ENCODE measurements at regions of chr1 and their contacts with region 1.

Region 1: GRCh38 chr1:27568300-27569087 is 35.5 kb downstream of the AHDC1 start:
- DNase-seq: peak; percentile 98
- CTCF ChIP-seq: peak; percentile 64

Region 2: DNA sequence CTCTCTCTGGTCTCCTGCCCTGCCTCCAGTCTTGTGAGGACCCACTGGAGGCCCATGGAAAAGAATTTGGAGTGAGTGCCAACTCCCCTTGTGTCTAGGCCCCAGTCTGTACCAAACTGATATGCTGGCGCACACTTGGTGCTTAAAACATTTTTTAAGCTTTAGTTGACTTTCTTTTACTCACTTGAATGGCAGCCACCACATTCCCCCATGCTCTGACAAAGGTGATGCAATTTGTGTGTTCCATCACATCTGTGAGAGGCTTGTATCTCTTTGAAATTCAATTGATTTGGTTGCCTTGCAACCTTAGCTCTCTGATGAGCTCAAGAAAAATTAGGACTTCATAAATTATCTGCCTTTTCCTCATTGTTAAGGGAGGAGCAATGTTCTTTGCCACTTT is 364.5 kb before region 1 on chr1:
- CTCF ChIA-PET with region 1: no interaction called
- POLR2A ChIA-PET with region 1: no interaction called
- DNase-seq: no peak
- CTCF ChIP-seq: no peak

Region 3: DNA sequence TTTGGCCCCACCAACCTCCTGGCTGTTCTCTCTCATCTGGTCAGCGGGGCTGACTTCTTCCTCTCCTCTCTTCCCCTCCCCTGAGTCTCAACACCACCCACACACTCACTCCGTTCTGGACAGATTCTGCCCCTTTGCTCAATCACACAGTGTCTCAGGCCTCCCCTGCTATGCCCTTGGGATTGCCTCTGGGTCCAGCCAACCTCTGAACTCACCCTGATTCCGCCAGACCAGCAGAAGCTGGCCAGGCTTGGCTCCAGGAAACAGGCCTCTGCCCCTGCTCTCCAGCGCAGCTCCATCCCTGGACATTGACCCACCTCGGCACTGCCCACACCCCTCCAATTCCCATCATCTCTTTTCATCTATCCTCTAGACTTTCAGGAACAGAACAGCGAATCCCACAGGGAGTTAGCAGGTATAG is 13.3 kb after region 1 on chr1:
- CTCF ChIA-PET with region 1: interaction called, 24 read pairs
- POLR2A ChIA-PET with region 1: no interaction called
- DNase-seq: no peak
- CTCF ChIP-seq: no peak

Region 4: DNA sequence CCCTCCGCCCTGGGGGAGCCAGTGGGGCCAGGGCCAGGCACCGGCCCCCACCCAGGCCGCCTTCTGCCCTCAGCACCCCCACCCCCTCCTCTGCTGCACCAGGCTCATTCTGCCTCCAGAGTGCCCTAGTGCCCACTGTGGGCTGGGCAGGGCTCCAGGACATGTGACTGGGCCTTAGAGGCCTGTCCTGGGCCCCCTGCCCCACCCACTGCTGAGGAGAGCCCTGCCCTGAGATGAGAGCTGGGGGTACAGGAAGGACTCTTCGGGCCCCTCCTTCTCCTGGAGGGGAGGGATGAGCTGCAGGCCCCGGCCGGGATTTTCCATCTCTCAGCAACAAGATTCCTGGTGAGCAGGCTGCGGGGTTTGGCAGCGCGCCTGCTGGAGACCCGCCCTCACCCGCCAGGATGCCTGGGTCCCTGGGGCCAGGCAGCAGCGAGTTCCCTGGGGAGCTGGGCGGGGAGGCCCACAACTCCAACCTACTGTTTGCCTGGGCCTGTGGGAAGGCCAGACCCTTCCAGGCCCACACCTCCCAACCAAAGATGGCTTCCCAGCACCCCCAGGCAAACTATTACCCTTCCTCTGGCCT is 21.4 kb after region 1 on chr1:
- CTCF ChIA-PET with region 1: interaction called, 18 read pairs
- POLR2A ChIA-PET with region 1: no interaction called
- DNase-seq: no peak
- CTCF ChIP-seq: no peak